Activated CD4-positive, alpha-beta memory T cell treated with anti-CD3 and anti-CD28 coated beads for 36 hours (primary cell): ENCODE measurements at regions of chr4 and their contacts with region 1.

Region 1: GRCh38 chr4:39032218-39033085 is at the start of gene TMEM156:
- DNase-seq: peak; percentile 71
- H3K4me3 Mint-ChIP-seq: peak within 1 kb of the TSS; percentile 78
- H3K27ac Mint-ChIP-seq: peak within 1 kb of the TSS; percentile 87
- H3K4me1 Mint-ChIP-seq: peaks cover 47% of the 10 kb centered on the region
- H3K27me3 Mint-ChIP-seq: no peaks in the 10 kb centered on the region
- total RNA-seq, gene TMEM156: 28.0 to 28.4 TPM

Region 2: DNA sequence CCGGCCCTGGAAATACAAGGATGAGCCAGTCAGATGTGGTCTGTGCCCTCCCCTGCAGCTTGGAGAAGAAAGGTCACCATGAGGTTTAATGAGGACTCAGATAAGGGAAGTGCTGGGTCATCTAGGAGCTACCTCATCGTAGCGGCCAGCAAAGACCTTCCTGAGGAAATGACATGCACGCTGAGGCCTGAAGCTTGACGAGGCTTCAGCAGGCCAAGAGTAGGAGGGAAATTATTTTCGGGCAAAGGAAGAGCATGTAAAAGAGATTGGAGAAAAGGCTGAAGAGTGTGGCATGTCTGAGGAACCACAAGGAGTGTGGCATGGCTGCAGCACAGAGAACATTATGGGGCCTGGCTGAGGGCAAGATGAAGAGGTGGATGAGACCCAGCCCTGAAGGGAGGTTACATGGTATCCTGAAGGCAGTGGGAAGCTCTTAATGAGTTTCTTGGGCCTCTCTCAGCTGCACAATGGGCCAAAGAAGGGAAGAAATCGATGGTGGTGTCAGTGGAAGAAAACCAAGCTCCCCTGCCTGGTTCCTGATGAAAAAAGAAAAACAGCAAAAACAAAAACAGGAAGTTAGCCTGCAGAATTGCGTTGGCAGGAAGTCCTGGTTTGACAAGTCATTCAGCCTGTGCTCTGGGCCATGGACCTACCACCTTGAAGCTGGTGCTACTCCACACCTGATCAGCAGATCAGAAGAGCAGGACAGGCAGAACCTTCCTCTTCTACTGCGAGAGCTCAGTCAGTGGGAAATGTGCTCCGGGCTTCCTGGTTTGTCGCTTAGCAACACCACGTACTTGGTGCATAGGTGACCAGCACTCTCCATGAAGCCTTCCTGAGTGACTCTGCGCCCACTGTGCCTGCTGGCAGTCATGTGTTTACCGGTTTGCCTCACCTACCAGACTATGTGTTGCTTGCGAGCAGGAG is 503.0 kb before region 1 on chr4:
- CTCF ChIA-PET with region 1: no interaction called
- POLR2A ChIA-PET with region 1: no interaction called
- intact Hi-C with region 1: loop called (anchors 10 kb)
- DNase-seq: peak; percentile 88
- H3K4me3 Mint-ChIP-seq: peak overlapping the region; percentile 15
- H3K27ac Mint-ChIP-seq: peak overlapping the region; percentile 85
- H3K4me1 Mint-ChIP-seq: peaks cover 42% of the 10 kb centered on the region
- H3K27me3 Mint-ChIP-seq: peaks cover 11% of the 10 kb centered on the region

Region 3: DNA sequence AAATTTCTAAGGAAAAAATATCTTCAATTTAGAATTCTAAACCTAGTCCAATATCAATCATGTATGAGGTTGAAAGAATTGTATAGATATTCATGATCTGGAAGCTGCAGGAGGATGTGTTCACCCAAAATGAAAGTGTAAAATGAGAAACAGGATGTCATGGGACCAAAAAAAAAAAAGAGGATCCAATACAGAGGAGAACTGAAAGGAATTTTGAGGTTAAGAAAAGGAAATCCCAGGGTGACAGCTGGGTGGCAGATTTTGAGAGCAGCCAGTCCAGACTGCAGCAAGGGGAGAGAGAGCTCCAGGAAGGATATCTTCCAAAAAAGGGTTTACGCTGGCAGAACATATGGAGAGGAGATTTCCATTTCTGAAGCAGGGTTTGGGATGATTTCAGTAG is 288.6 kb before region 1 on chr4:
- CTCF ChIA-PET with region 1: no interaction called
- POLR2A ChIA-PET with region 1: no interaction called
- intact Hi-C with region 1: no loop called
- DNase-seq: no peak
- H3K4me3 Mint-ChIP-seq: no peak overlapping the region
- H3K27ac Mint-ChIP-seq: no peak overlapping the region
- H3K4me1 Mint-ChIP-seq: peaks cover 3% of the 10 kb centered on the region
- H3K27me3 Mint-ChIP-seq: no peaks in the 10 kb centered on the region

Region 4: DNA sequence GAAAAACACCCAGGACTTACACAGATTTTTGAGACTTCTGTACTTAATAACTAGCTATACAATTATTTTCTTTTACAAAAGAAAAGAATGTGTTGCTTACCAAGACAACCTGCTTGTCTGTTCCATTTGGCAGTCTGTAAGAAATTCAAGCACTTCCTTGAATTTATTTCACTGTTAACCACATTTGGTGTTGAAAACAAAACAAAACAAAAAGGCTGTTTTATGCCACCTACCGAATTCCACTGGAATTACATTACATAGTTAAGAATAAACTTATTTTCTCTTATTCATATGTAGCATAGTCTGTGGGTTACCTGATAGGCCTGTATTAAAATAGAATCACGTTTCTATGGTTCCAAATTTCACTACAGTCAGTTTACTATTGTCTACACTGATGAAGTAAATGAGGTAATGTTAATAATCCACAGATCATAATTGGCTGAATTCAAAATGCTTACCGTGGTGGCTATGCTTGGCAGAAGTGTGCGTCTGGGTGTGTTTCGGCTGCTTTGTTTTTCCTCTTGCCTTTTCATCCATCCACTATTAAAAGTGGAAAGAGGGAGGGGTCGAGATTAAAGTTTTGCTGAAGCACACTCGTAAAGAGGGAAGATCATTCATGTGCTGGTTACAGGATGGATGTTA is 227.7 kb before region 1 on chr4 and contains the start of gene TLR1:
- CTCF ChIA-PET with region 1: no interaction called
- POLR2A ChIA-PET with region 1: no interaction called
- intact Hi-C with region 1: no loop called
- DNase-seq: peak; percentile 24
- H3K4me3 Mint-ChIP-seq: peak within 1 kb of the TSS; percentile 76
- H3K27ac Mint-ChIP-seq: peak within 1 kb of the TSS; percentile 91
- H3K4me1 Mint-ChIP-seq: peaks cover 35% of the 10 kb centered on the region
- H3K27me3 Mint-ChIP-seq: no peaks in the 10 kb centered on the region
- total RNA-seq, gene TLR1: 1.5 to 1.8 TPM

Region 5: GRCh38 chr4:38889143-38889542 is 143.3 kb before region 1 on chr4:
- CTCF ChIA-PET with region 1: no interaction called
- POLR2A ChIA-PET with region 1: no interaction called
- intact Hi-C with region 1: loop called (anchors 1 kb)
- DNase-seq: no peak
- H3K4me3 Mint-ChIP-seq: peak overlapping the region; percentile 48
- H3K27ac Mint-ChIP-seq: peak overlapping the region; percentile 81
- H3K4me1 Mint-ChIP-seq: peaks cover 22% of the 10 kb centered on the region
- H3K27me3 Mint-ChIP-seq: no peaks in the 10 kb centered on the region

Region 6: DNA sequence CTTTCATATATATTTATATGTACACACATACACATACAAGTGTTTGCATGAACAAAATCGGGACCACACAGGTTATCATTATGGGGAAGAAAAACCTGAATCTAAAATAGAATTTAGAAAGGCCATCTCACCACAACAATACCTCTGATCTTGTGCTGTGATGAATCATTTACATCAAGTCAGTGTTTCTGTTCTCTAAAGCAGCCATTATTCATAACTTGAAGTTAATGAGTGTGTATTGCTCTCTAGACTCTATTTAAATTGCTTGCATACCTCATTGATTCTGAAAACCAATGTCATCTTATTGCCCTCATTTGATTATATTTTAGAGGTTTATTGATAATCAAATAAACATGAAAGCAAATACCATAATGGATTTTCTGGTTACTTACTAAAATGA is 93.3 kb before region 1 on chr4:
- CTCF ChIA-PET with region 1: no interaction called
- POLR2A ChIA-PET with region 1: interaction called, 6 read pairs
- intact Hi-C with region 1: loop called (anchors 1 kb)
- DNase-seq: no peak
- H3K4me3 Mint-ChIP-seq: no peak overlapping the region
- H3K27ac Mint-ChIP-seq: peak overlapping the region; percentile 68
- H3K4me1 Mint-ChIP-seq: peaks cover 41% of the 10 kb centered on the region
- H3K27me3 Mint-ChIP-seq: no peaks in the 10 kb centered on the region

Region 7: DNA sequence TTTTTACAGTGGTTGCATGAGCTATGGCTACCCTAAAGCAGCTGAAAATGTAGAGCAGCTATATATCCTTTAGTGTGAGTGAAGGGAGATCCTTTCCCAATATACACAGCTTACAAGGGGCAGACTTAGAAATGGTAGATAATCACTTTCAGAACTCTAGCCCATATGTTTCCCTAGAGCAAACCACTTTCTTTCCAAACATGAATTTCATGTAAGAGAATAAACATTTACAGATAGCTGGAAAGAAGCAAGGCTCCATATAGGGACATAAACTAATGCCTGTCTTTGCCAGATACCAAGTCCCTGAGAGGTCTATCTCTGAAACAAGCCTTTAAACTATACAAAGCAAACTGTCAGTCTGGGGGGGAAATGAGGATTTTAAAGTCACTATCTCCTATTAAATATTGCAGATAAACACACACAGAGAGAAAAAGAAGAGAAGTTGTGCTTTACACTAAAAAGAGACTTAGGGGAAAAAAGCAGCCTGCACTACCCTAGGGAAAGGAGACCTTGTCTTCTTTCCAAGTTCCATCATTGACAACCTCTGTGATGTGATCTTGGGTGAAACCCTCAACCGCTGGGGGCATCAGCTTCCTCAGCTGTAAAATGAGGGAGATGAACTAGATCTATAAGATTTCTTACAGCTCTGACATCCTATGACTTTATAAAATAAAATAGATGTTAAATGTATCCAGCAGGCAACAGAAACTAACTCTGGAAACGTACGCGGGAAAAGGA is 73.8 kb before region 1 on chr4:
- CTCF ChIA-PET with region 1: interaction called, 4 read pairs
- POLR2A ChIA-PET with region 1: no interaction called
- intact Hi-C with region 1: loop called (anchors 1 kb)
- DNase-seq: no peak
- H3K4me3 Mint-ChIP-seq: no peak overlapping the region
- H3K27ac Mint-ChIP-seq: peak overlapping the region; percentile 97
- H3K4me1 Mint-ChIP-seq: peaks cover 43% of the 10 kb centered on the region
- H3K27me3 Mint-ChIP-seq: peaks cover under 1% of the 10 kb centered on the region

Region 8: DNA sequence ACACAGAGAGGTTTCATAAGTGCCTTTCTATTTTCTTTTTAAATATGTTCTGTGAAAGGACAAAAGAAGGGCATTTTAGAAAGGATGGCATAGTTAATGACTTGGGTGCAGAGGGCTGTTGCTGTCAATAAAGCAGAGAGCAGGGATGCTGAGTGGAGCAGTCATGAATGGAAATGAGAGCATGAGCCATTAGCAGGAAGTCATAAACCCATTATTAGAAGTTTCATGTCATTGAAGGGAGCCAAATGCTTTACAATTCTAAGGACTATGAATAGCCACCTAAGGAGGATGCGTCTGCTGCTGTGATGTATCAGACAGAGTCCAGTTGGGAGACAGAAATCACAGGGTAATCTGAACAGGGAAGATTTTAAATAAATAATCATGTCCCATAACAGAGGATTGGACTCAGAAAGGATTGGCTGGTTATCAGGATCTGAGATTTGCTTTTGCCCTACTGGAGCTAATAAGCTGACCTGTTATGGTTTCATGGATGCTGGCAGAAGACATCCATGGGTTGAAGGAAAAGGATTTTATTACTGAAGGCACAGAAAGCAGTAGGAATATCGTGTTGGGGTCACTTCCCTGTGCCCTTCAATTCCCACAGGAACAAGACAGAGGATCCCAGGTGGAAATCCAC is 102.3 kb after region 1 on chr4:
- CTCF ChIA-PET with region 1: interaction called, 3 read pairs
- POLR2A ChIA-PET with region 1: no interaction called
- intact Hi-C with region 1: loop called (anchors 1 kb)
- DNase-seq: no peak
- H3K4me3 Mint-ChIP-seq: no peak overlapping the region
- H3K27ac Mint-ChIP-seq: no peak overlapping the region
- H3K4me1 Mint-ChIP-seq: peaks cover 7% of the 10 kb centered on the region
- H3K27me3 Mint-ChIP-seq: no peaks in the 10 kb centered on the region

Region 9: GRCh38 chr4:39181905-39182638 is 149.6 kb after region 1 on chr4 and contains the start of gene WDR19:
- CTCF ChIA-PET with region 1: interaction called, 4 read pairs
- POLR2A ChIA-PET with region 1: no interaction called
- intact Hi-C with region 1: loop called (anchors 2 kb)
- DNase-seq: peak; percentile 99
- H3K4me3 Mint-ChIP-seq: no peak within 1 kb of the TSS
- H3K27ac Mint-ChIP-seq: no peak within 1 kb of the TSS
- H3K4me1 Mint-ChIP-seq: peaks cover 5% of the 10 kb centered on the region
- H3K27me3 Mint-ChIP-seq: no peaks in the 10 kb centered on the region
- total RNA-seq, gene WDR19: 16.4 to 17.9 TPM

Region 10: GRCh38 chr4:40608628-40609027 is 1576.2 kb after region 1 on chr4:
- CTCF ChIA-PET with region 1: no interaction called
- POLR2A ChIA-PET with region 1: no interaction called
- intact Hi-C with region 1: no loop called
- DNase-seq: no peak
- H3K4me3 Mint-ChIP-seq: no peak overlapping the region
- H3K27ac Mint-ChIP-seq: no peak overlapping the region
- H3K4me1 Mint-ChIP-seq: peaks cover 3% of the 10 kb centered on the region
- H3K27me3 Mint-ChIP-seq: peaks cover 4% of the 10 kb centered on the region